ENCODE measurements at regions of chr5 and their contacts with region 1.

Region 1: GRCh38 chr5:160008877-160009590 is at the start of gene TTC1:
- DNase-seq: peak; percentile 98
- ATAC-seq: peak; percentile 97
- H3K4me3 ChIP-seq: peak within 1 kb of the TSS; percentile 85 to 100 (median 98)
- H3K4me3 Mint-ChIP-seq: peak within 1 kb of the TSS; percentile 87
- H3K27ac ChIP-seq: peak within 1 kb of the TSS; percentile 77 to 96
- H3K27ac Mint-ChIP-seq: peak within 1 kb of the TSS; percentile 83
- H3K4me1 ChIP-seq: peaks cover 18 to 19% of the 10 kb centered on the region in 2 donors
- H3K4me1 Mint-ChIP-seq: peaks cover 25% of the 10 kb centered on the region
- H3K27me3 ChIP-seq: no peaks in the 10 kb centered on the region
- H3K27me3 Mint-ChIP-seq: no peaks in the 10 kb centered on the region
- CTCF ChIP-seq: no peak
- total RNA-seq, gene TTC1: 37.5 and 40.4 TPM in 2 replicates

Region 2: GRCh38 chr5:160105686-160106360 is 96.8 kb after region 1 on chr5:
- CTCF ChIA-PET with region 1: no interaction called
- POLR2A ChIA-PET with region 1: no interaction called
- intact Hi-C with region 1: no loop called
- DNase-seq: peak; percentile 29
- ATAC-seq: peak; percentile 51
- H3K4me3 ChIP-seq: no peak overlapping the region
- H3K4me3 Mint-ChIP-seq: no peak overlapping the region
- H3K27ac ChIP-seq: peak overlapping the region in 1 of 2 donors; percentile 53
- H3K27ac Mint-ChIP-seq: peak overlapping the region; percentile 39
- H3K4me1 ChIP-seq: peaks cover 4 to 7% of the 10 kb centered on the region in 2 donors
- H3K4me1 Mint-ChIP-seq: peaks cover 28% of the 10 kb centered on the region
- H3K27me3 ChIP-seq: no peaks in the 10 kb centered on the region
- H3K27me3 Mint-ChIP-seq: no peaks in the 10 kb centered on the region
- CTCF ChIP-seq: no peak

Region 3: GRCh38 chr5:160119142-160119904 is 110.3 kb after region 1 on chr5 and contains the start of gene PWWP2A:
- CTCF ChIA-PET with region 1: no interaction called
- POLR2A ChIA-PET with region 1: no interaction called
- intact Hi-C with region 1: loop called (anchors 1 kb)
- DNase-seq: peak; percentile 99
- ATAC-seq: peak; percentile 90
- H3K4me3 ChIP-seq: peak within 1 kb of the TSS; percentile 56 to 96 (median 72)
- H3K4me3 Mint-ChIP-seq: peak within 1 kb of the TSS; percentile 91
- H3K27ac ChIP-seq: peak within 1 kb of the TSS; percentile 51 to 83
- H3K27ac Mint-ChIP-seq: peak within 1 kb of the TSS; percentile 96
- H3K4me1 ChIP-seq: peaks cover 6 to 7% of the 10 kb centered on the region in 2 donors
- H3K4me1 Mint-ChIP-seq: peaks cover 16% of the 10 kb centered on the region
- H3K27me3 ChIP-seq: no peaks in the 10 kb centered on the region
- H3K27me3 Mint-ChIP-seq: peaks cover 4% of the 10 kb centered on the region
- CTCF ChIP-seq: no peak
- total RNA-seq, gene PWWP2A: 48.8 and 50.1 TPM in 2 replicates